ENCODE measurements at regions of chr2 and their contacts with region 1.

Region 1: DNA sequence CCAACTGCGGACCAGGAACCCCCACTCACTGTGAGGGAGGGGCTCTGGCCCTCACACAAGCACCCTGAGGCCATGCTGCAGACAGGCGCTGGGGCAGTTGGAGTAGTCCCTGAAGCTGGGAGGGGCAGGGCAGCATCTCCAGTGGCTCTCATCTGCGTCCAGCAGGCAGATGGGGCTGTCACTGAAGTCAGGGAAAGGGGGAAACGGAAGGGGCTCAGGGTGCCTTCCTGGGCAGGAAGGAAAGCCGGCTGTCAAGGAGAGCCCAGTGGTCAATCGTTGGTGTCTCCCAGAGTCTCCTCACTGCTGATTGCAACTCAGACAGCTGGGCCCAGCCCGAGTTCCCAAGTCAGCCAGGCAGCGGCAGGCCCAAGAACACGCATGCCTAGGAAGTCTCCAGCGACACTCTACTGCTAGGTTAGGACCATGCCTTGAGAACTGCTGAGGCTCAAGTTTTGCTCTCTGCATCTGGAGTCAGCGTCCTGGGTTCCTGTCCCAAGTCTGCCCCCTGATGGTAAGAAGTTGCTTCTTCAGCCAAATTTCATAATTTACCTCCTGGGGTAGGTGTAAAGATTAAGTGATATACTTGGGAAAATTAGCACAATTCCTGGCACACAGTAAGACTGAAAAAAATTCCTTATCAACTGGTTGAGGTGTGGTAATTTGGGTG is 27.5 kb upstream of the NMUR1 start:
- DNase-seq: peak in 9 of 10 donors; percentile 27 to 60 (median 48)
- H3K4me3 ChIP-seq: peak overlapping the region in 1 of 59 donors; percentile 3
- H3K27ac ChIP-seq: peak overlapping the region in 3 of 59 donors; percentile 11 to 27 (median 17)
- H3K27me3 ChIP-seq: no peaks in the 10 kb centered on the region
- CTCF ChIP-seq: peak; percentile 61 to 90 (median 76)

Region 2: DNA sequence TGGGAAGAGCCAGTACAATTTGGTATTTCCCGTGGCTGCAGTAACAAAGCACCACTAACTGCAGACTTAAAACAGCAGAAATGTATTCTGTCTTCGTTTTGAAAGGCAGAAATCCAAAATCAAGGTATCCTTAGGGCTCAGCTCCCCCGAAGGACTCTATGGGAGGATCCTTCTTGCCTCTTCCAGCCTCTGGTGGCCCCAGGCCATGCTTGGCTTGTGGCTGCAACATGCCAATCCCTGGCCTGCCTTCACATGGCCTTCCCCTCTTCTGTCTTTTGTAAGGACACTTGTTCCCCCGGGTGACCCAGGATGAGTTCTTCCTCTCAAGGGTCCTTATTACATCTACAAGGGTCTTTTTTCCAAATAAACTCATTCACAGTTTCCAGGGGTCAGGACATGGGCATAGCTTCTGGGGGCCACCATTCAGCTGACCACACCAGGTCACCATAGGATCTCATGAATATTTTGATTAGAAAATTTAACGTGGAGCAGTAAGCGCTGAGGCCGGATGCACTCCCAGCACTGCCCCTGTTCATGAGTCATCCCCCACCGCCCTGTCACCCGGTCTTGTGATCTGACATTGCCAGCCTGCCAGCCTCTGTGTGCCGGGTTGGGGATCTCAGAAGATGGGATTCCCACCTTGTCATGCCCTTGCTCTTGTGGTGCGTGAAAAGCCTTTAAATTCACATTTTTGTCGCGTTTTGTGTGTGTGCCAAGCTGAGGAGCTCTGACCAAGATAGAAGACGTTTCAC is 223.3 kb before region 1 on chr2:
- intact Hi-C with region 1: no loop called
- DNase-seq: peak in 1 of 10 donors; percentile 13
- H3K4me3 ChIP-seq: no peak overlapping the region
- H3K27ac ChIP-seq: peak overlapping the region in 1 of 59 donors; percentile 2
- H3K27me3 ChIP-seq: no peaks in the 10 kb centered on the region
- CTCF ChIP-seq: no peak

Region 3: GRCh38 chr2:231463698-231464575 is 93.8 kb before region 1 on chr2 and contains the start of gene NCL:
- intact Hi-C with region 1: loop called (anchors 5 kb)
- DNase-seq: peak in 5 of 10 donors; percentile 36 to 65 (median 46)
- H3K4me3 ChIP-seq: peak within 1 kb of the TSS; percentile 76 to 100 (median 94)
- H3K27ac ChIP-seq: peak within 1 kb of the TSS; percentile 70 to 99 (median 92)
- H3K27me3 ChIP-seq: no peaks in the 10 kb centered on the region
- CTCF ChIP-seq: peak in 16 of 56 donors; percentile 3 to 25 (median 8)
- total RNA-seq, gene NCL: 239 to 396 (median 335) TPM

Region 4: GRCh38 chr2:231482806-231483391 is 74.8 kb before region 1 on chr2:
- intact Hi-C with region 1: loop called (anchors 2 to 5 kb)
- DNase-seq: peak; percentile 53 to 82 (median 64)
- H3K4me3 ChIP-seq: peak overlapping the region; percentile 20 to 69 (median 53)
- H3K27ac ChIP-seq: peak overlapping the region in 52 of 59 donors; percentile 1 to 86 (median 68)
- H3K27me3 ChIP-seq: no peaks in the 10 kb centered on the region
- CTCF ChIP-seq: peak; percentile 48 to 92 (median 84)

Measured in dorsolateral prefrontal cortex (tissue), 120 donors.